ENCODE measurements at regions of chr12 and their contacts with region 1.

Region 1: GRCh38 chr12:122635471-122635870 is 67.7 kb downstream of the HCAR2 start:
- DNase-seq: no peak
- CTCF ChIP-seq: no peak

Region 2: DNA sequence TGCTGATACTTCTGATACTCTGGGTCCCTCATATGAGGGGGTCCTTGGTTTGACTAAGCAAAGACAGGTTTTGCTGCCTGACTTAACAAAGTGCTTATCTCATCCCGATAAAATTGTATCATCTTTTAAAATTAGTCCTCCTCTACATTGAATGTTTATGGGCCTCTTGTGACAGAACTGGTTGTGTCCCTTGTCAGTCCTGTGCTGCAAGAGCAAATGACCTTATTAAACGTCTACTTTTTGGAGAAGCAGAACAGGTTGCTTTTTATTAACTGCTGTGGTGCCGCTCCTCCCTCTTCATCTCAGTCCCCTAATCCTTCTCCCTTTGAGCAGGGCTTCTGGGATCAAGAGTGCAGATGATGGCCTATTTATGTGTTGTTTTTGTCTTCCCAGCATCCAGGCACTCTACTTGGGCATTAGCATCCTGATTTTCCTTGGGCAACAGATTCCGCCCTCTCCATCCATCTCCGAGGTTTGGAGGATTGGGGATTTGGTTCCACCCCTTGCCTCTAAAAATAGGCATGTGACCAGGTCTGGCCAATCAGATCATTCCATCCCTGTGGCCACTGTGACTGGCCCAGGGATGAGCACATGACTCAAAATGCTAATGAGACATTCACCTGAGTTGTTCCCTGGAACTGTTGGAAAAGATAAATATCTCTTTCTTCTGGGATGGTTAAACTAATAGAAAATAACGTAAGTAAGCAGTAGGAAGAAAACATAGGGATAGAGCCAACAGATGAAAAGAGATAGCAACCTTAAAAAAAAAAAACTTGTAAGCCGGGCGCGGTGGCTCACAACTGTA is 114.3 kb after region 1 on chr12:
- in situ Hi-C with region 1: loop called (anchors 5 kb)
- DNase-seq: no peak
- CTCF ChIP-seq: no peak

Region 3: DNA sequence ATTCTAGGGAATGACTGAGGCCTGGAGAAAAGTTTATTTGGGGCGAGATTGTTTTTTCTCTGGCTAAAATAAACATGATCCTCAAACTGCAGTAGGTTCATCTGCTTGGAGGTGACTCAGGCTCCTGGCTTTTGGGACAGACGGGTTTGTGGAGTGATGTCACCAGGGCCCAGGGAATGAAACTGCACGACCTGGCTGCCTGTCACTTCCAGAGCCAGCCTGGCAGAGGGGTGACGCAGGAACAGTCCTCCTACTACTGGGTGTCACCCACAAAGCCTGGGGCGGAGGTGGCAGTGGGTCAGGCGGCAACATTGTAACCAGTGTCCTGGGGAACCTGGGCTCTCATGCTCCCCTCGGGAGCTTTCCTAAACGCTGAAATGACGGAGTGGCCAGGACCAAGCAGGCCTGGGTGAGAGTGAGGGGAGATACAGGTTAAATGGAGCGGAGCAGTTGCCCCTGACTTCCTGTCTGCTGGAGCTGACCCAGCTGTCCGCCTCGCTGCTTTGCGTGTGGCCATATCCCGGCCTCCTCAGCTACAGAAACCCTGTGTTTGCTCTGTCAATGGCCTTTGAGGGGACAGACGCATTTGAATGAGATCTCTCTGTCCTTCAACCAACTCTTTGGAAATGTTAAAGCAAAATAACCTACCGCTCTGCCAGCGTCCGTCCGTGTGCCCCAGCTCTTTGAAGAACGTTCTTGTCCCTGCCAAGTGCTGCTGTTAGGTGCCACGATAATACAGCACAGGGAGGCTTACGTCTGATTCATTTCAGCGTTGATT is 206.3 kb after region 1 on chr12:
- in situ Hi-C with region 1: no loop called
- DNase-seq: no peak
- CTCF ChIP-seq: no peak